Esophagus squamous epithelium (tissue), 5 donors: ENCODE measurements at regions of chr1 and their contacts with region 1.

Region 1: DNA sequence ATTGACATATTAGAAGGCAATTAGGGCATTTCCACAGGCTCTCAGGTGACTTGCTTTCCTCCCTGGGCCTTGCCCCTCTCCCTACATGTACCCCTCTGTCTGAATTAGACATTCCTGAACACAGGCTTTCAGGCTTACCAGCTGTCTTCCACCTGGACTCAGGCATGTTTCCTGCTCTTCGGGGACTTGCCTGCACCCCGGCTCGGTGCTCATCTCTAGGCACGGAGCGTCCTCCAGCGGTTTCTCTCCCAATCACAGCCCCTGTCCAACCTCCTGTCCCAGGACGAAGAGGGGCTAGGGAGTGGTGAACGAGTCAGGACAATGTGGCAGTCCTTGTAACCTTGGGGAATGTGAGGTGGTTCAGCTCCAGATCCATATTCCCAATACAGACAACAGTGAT is 4.2 kb downstream of the PROK1 start:
- DNase-seq: no peak
- H3K4me3 ChIP-seq: no peak overlapping the region
- H3K27ac ChIP-seq: no peak overlapping the region
- H3K4me1 ChIP-seq: no peaks in the 10 kb centered on the region
- H3K27me3 ChIP-seq: peaks cover 0 to 31% (median 0%) of the 10 kb centered on the region in 4 donors
- CTCF ChIP-seq: no peak
- POLR2A ChIP-seq: no peak

Region 2: DNA sequence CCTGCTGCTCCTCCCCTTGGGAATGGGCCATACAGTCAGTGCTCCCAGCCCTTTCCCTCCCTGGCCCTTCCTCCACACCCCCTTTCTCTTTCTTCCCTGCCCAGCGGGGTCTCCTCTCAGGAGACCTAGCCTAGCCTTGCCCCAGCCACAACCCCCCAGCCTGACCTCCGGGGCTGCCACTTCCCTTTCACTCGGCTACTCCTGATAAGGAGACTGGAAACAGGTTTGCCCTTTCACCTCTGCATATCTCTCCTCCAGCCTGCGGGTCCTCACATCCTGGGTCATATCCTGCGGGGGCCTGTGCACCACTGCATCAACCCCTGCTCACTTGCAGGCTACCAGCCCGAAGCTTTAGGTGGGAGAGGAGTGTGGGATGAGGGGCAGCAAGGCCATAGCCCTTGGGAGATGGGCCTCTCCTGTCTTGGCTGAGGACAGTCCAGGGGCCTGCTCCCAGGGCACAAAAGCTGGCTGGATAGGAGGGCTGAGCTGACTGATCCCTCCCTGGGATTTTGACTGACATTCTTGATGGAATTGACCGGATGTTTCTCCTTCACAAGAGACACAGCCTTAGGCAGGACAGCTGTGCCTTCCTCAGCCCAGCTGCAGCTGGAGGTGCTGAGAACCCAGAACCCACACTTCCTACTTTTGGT is 365.5 kb before region 1 on chr1:
- intact Hi-C with region 1: no loop called
- DNase-seq: no peak
- H3K4me3 ChIP-seq: no peak overlapping the region
- H3K27ac ChIP-seq: no peak overlapping the region
- H3K4me1 ChIP-seq: peaks cover 0 to 6% (median 0%) of the 10 kb centered on the region in 3 donors
- H3K27me3 ChIP-seq: peaks cover 0 to 55% (median 0%) of the 10 kb centered on the region in 4 donors
- CTCF ChIP-seq: no peak
- POLR2A ChIP-seq: no peak

Region 3: GRCh38 chr1:110203021-110203661 is 252.0 kb before region 1 on chr1:
- intact Hi-C with region 1: loop called (anchors 5 kb)
- DNase-seq: no peak
- H3K4me3 ChIP-seq: no peak overlapping the region
- H3K27ac ChIP-seq: no peak overlapping the region
- H3K4me1 ChIP-seq: peaks cover 0 to 7% (median 0%) of the 10 kb centered on the region in 3 donors
- H3K27me3 ChIP-seq: no peaks in the 10 kb centered on the region
- CTCF ChIP-seq: peak; percentile 73 to 96 (median 86)
- POLR2A ChIP-seq: no peak

Region 4: DNA sequence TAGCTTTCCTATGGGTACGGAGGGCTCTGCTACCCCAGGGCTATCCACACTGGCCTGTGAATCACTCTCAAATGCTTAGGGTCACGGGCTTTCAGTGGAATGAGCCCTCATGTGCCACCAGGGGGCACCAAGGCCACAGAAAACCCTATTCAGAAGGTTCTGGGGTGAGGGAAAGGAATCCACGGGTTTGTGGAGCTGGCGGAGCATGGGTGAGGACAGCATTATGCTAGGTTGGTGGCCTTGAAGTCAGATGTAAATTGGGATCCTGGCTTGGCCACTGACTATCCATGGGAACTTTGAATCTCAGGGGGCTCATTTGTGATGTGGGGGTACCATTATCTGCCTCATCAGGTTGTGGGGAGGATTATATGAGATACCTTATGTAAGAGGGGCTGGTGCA is 42.6 kb before region 1 on chr1:
- intact Hi-C with region 1: loop called (anchors 5 kb)
- DNase-seq: no peak
- H3K4me3 ChIP-seq: no peak overlapping the region
- H3K27ac ChIP-seq: no peak overlapping the region
- H3K4me1 ChIP-seq: peaks cover 0 to 11% (median 5%) of the 10 kb centered on the region in 3 donors
- H3K27me3 ChIP-seq: no peaks in the 10 kb centered on the region
- CTCF ChIP-seq: peak in 5 of 6 experiments; percentile 70 to 85 (median 78)
- POLR2A ChIP-seq: no peak